ENCODE measurements at regions of chr12 and their contacts with region 1.

Region 1: GRCh38 chr12:10227648-10228047 is 15.0 kb downstream of the GABARAPL1 start:
- DNase-seq: no peak

Region 2: DNA sequence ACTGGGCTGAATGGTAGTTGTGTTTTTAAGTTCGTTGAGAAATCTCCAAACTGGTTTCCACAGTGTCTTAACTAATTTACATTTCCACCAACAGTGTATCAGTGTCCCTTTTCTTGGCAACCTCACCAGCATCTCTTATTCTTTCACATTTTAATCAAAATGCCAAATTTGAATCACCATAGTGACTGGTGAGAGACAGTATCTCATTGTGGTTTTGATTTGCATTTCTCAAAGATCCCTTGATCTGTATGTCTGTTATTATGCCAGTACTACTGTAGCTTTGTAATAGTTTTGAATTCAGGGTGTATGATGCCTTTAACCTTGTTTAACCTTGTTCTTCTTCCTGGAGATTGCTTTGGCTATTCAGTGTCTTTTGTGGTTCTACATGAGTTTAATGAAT is 275.8 kb after region 1 on chr12:
- intact Hi-C with region 1: loop called in 1 of 2 experiments (anchors 2 kb)
- DNase-seq: no peak